ENCODE measurements at regions of chrX and their contacts with region 1.

Region 1: DNA sequence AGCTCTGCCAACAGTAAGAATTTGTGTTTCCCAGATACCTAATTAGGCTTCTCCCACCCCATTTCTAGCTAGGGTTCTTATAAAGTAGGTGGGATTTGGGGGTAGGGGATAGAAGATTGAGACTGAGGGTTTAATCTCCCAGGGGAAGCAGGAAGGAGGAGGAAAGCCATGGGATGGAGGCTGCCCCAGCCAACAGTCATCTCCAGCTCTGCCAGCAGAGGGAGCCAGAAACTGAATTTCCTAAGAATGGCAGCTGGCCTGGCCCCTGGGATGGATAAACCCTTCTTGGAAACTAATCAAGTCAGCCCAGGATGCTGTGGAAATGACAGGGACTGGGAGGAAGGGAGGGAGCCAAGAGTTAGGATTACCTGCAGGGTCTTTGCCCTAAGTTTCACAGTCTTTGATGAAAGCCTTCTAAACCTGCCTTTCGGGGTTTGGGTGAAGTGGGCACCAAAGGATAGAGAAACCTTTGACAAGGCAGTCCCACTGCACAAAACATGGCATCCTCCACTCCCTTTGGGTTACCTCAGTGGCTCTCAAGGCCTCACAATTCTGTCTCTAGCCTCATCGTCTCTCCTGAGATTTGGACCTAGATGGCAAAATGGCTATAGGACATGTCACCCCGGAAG is 6.7 kb upstream of the ERCC6L start:
- DNase-seq: no peak
- ATAC-seq: peak; percentile 91
- H3K4me3 ChIP-seq: no peak overlapping the region
- H3K27ac ChIP-seq: no peak overlapping the region
- H3K4me1 ChIP-seq: no peaks in the 10 kb centered on the region
- H3K27me3 ChIP-seq: no peaks in the 10 kb centered on the region
- CTCF ChIP-seq: peak; percentile 80 to 83 (median 81)
- EP300 ChIP-seq: no peak
- POLR2A ChIP-seq: no peak
- RAD21 ChIP-seq: peak; percentile 69

Region 2: DNA sequence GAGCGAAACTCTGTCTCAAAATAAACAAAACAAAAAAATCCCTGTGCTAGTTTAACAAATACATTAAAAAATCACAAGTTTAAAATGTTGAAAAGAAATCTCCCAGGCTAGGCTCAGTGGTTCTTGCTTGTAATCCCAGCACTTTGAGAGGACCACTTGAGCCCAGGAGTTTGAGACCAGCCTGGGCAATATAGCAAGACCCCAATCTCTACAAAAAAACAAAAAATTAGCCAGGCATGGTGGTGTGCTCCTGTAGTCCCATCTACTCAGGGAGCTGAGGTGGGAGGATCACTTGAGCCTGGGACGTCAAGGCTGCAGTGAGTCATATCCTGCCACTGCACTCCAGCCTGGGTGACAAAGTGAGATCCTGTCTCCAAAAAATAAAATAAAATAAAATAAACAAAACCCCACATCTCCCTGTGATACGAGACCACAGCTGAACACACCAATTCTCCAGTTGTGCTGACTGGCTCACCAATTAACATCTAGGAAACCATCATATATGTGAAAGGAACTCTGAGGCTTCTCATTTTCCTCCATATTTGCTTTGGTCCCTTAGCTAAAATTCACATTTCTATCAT is 24.2 kb after region 1 on chrX:
- CTCF ChIA-PET with region 1: interaction called, 32 read pairs
- POLR2A ChIA-PET with region 1: no interaction called
- RAD21 ChIA-PET with region 1: interaction called, 4 read pairs
- SMC1A ChIA-PET with region 1: interaction called, 9 read pairs
- in situ Hi-C with region 1: no loop called
- intact Hi-C with region 1: no loop called
- DNase-seq: no peak
- ATAC-seq: peak; percentile 14; the same call in 2 of the 3 replicates
- H3K4me3 ChIP-seq: no peak overlapping the region
- H3K27ac ChIP-seq: no peak overlapping the region
- H3K4me1 ChIP-seq: peaks cover 4% of the 10 kb centered on the region; the same call in 1 of the 2 replicates
- H3K27me3 ChIP-seq: no peaks in the 10 kb centered on the region
- CTCF ChIP-seq: no peak
- EP300 ChIP-seq: no peak
- POLR2A ChIP-seq: no peak
- RAD21 ChIP-seq: no peak

Region 3: GRCh38 chrX:72276478-72276953 is 30.9 kb after region 1 on chrX:
- CTCF ChIA-PET with region 1: interaction called, 32 read pairs
- POLR2A ChIA-PET with region 1: no interaction called
- RAD21 ChIA-PET with region 1: no interaction called
- SMC1A ChIA-PET with region 1: interaction called, 9 read pairs
- in situ Hi-C with region 1: no loop called
- intact Hi-C with region 1: no loop called
- DNase-seq: no peak
- ATAC-seq: peak; percentile 25
- H3K4me3 ChIP-seq: peak overlapping the region; percentile 83
- H3K27ac ChIP-seq: peak overlapping the region; percentile 94
- H3K4me1 ChIP-seq: peaks cover 4% of the 10 kb centered on the region; the same call in 1 of the 2 replicates
- H3K27me3 ChIP-seq: peaks cover 0 to 2% of the 10 kb centered on the region in 2 experiments; a peak in 2 of 4 replicates
- CTCF ChIP-seq: no peak
- EP300 ChIP-seq: no peak
- POLR2A ChIP-seq: no peak
- RAD21 ChIP-seq: no peak

Region 4: DNA sequence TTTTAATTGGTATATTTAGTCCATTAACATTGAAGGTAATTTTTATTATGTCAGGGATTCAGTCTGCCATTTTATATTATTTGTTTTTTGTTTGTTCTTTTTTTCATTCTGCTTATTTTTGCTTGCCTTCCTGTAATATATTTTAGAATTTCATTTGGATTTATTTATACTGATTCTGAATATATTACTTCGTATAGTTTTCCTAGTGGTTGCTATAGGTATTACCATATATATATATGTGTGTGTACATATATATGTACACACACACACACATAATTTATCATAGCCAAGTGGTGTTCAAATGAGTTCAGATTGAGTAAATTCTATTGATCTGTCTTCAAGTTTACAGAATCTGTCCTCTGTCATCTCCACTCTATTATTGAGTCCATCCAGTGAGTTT is 48.9 kb after region 1 on chrX:
- CTCF ChIA-PET with region 1: no interaction called
- POLR2A ChIA-PET with region 1: no interaction called
- RAD21 ChIA-PET with region 1: no interaction called
- SMC1A ChIA-PET with region 1: no interaction called
- in situ Hi-C with region 1: loop called (anchors 5 kb)
- intact Hi-C with region 1: no loop called
- DNase-seq: no peak
- ATAC-seq: no peak
- H3K4me3 ChIP-seq: no peak overlapping the region
- H3K27ac ChIP-seq: no peak overlapping the region
- H3K4me1 ChIP-seq: no peaks in the 10 kb centered on the region
- H3K27me3 ChIP-seq: peaks cover 0 to 3% of the 10 kb centered on the region in 2 experiments; a peak in 3 of 4 replicates
- CTCF ChIP-seq: no peak
- EP300 ChIP-seq: no peak
- POLR2A ChIP-seq: no peak
- RAD21 ChIP-seq: no peak

Region 5: DNA sequence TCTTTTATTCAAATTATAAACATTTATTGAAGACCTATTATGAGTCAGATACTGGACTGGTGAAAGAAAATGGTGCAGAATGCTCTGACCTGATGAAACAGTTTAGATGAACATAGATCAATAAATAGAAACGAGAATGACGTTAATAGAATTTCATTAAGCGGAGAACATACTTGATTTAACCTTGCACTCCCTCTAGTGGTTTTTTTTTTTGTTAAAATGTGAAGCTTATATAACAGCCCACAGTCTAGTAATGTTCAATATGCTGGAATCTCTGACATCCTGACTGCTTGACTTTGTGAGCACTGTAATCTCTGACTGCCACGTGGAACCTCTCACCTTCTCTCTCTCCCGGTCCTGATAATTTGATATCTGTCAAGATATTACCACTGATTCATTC is 294.7 kb after region 1 on chrX:
- CTCF ChIA-PET with region 1: interaction called, 40 read pairs
- POLR2A ChIA-PET with region 1: no interaction called
- RAD21 ChIA-PET with region 1: interaction called, 8 read pairs
- SMC1A ChIA-PET with region 1: interaction called, 17 read pairs
- in situ Hi-C with region 1: loop called (anchors 10 kb)
- intact Hi-C with region 1: loop called (anchors 1 kb)
- DNase-seq: no peak
- ATAC-seq: peak; percentile 79
- H3K4me3 ChIP-seq: no peak overlapping the region
- H3K27ac ChIP-seq: no peak overlapping the region
- H3K4me1 ChIP-seq: no peaks in the 10 kb centered on the region
- H3K27me3 ChIP-seq: no peaks in the 10 kb centered on the region
- CTCF ChIP-seq: peak in 2 of 3 experiments; percentile 15 to 38; a peak in 1 of 6 replicates
- EP300 ChIP-seq: no peak
- POLR2A ChIP-seq: no peak
- RAD21 ChIP-seq: peak; percentile 47; the same call in 1 of the 2 replicates

Measured in GM12878 (cell line).